PC-3 (cell line): ENCODE measurements at regions of chr18 and their contacts with region 1.

Region 1: DNA sequence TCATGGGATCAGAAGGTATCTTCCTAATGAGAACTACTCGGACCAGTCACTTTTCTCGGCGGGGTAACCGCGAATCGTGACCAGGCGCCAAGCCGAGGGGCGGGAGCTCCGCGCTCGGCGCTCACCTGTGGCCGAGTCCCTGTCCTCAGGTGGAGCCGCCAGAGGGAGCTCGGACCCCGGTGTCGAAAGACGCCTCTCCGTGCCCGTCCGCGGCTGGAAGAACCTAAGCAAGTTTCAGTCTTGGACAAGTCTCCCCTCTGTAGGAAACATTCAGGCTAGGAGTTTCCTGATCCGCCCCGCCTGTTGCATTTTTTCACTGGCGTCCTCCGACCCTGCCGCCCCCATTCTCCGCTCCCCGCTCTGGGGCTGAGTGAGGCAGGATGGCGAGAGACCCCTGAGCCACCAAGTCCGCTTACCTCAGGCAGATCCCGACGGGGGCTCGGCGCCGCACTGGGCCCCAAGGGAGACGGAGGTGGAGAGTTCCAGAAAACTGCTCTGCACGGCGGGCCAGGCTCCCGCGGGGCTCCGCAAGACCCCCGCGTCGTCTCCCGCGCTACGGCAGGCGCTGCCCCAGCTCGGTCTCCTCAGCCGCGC is 478 bp downstream of the DSEL start:
- DNase-seq: peak; percentile 93
- ATAC-seq: peak; percentile 70
- H3K4me3 ChIP-seq: peak overlapping the region; percentile 99
- H3K27ac ChIP-seq: peak overlapping the region; percentile 42; the same call in 1 of the 2 replicates
- H3K4me1 ChIP-seq: peaks cover 26% of the 10 kb centered on the region
- H3K27me3 ChIP-seq: no peaks in the 10 kb centered on the region
- CTCF ChIP-seq: peak; percentile 83

Region 2: DNA sequence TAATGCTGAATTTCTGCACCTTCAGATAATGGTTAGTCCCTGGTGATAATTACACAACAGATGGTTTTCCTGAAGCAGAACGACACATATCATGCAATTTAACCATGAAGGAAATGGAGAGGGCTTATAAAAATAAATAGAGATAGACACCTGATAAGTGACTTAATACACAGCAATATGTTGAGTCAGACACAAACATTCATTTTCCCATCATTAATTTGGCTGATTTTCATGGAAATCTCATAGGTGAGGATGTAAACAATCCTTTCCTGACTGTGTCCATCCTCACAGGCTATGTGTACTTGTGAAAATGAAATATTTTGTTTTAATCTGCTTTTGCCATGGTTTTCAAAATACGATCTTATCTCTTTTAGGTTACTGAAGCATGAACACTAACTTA is 37.4 kb after region 1 on chr18:
- CTCF ChIA-PET with region 1: no interaction called
- POLR2A ChIA-PET with region 1: no interaction called
- intact Hi-C with region 1: no loop called
- DNase-seq: no peak
- ATAC-seq: no peak
- H3K4me3 ChIP-seq: no peak overlapping the region
- H3K27ac ChIP-seq: no peak overlapping the region
- H3K4me1 ChIP-seq: no peaks in the 10 kb centered on the region
- H3K27me3 ChIP-seq: no peaks in the 10 kb centered on the region
- CTCF ChIP-seq: no peak

Region 3: DNA sequence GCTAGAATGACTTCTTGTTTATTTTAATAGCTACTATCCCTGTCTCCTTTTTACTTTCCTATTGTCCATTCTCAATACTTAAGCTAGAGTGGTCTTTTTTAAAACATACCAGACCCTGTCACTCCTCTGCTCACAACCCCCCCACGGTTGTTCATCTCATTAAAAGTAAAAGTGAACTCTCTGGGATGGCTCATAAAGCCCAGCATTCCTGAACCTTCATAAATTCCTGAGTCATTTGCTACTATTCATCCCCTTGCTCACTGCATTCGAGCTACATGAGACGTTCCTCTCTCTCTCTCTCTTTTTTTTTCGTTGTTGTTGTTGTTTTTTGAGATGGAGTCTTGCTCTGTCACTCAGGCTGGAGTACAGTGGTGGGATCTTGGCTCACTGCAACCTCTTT is 149.2 kb after region 1 on chr18:
- CTCF ChIA-PET with region 1: interaction called, 3 read pairs
- POLR2A ChIA-PET with region 1: interaction called, 19 read pairs
- intact Hi-C with region 1: no loop called
- DNase-seq: peak; percentile 75
- ATAC-seq: peak; percentile 72
- H3K4me3 ChIP-seq: no peak overlapping the region
- H3K27ac ChIP-seq: no peak overlapping the region
- H3K4me1 ChIP-seq: peaks cover 10% of the 10 kb centered on the region
- H3K27me3 ChIP-seq: no peaks in the 10 kb centered on the region
- CTCF ChIP-seq: no peak

Region 4: GRCh38 chr18:67845035-67845434 is 329.0 kb after region 1 on chr18:
- CTCF ChIA-PET with region 1: no interaction called
- POLR2A ChIA-PET with region 1: no interaction called
- intact Hi-C with region 1: loop called (anchors 1 kb)
- DNase-seq: peak; percentile 57
- ATAC-seq: no peak
- H3K4me3 ChIP-seq: no peak overlapping the region
- H3K27ac ChIP-seq: no peak overlapping the region
- H3K4me1 ChIP-seq: no peaks in the 10 kb centered on the region
- H3K27me3 ChIP-seq: no peaks in the 10 kb centered on the region
- CTCF ChIP-seq: peak; percentile 63

Region 5: DNA sequence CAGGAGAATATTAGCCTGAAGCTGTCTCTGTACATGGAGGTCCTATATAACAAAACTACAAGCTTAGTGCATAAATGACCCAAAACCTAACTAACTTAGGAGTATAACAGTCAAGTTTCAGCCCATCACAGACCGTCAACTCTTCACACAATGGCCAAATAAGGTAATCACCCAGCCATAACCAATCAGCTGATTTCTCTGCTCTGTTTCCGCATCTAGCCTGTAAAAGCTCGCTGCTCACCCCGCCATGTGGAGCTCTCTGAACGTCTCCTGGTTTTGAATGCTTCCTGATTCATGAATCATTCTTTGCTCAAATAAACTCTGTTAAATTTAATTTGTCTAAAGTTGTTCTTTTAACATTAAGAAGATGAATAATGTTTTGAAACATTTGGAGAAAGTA is 605.3 kb after region 1 on chr18:
- CTCF ChIA-PET with region 1: no interaction called
- POLR2A ChIA-PET with region 1: no interaction called
- intact Hi-C with region 1: loop called (anchors 1 kb)
- DNase-seq: peak; percentile 79
- ATAC-seq: peak; percentile 86
- H3K4me3 ChIP-seq: no peak overlapping the region
- H3K27ac ChIP-seq: peak overlapping the region; percentile 70
- H3K4me1 ChIP-seq: peaks cover 27% of the 10 kb centered on the region
- H3K27me3 ChIP-seq: no peaks in the 10 kb centered on the region
- CTCF ChIP-seq: peak; percentile 17; the same call in 1 of the 2 replicates

Region 6: GRCh38 chr18:68623342-68623741 is 1107.3 kb after region 1 on chr18:
- CTCF ChIA-PET with region 1: no interaction called
- POLR2A ChIA-PET with region 1: no interaction called
- intact Hi-C with region 1: loop called (anchors 2 kb)
- DNase-seq: peak; percentile 78
- ATAC-seq: peak; percentile 57
- H3K4me3 ChIP-seq: no peak overlapping the region
- H3K27ac ChIP-seq: no peak overlapping the region
- H3K4me1 ChIP-seq: no peaks in the 10 kb centered on the region
- H3K27me3 ChIP-seq: no peaks in the 10 kb centered on the region
- CTCF ChIP-seq: peak; percentile 88